Mucosa of descending colon (tissue), 3 donors: ENCODE measurements at regions of chrX and their contacts with region 1.

Region 1: DNA sequence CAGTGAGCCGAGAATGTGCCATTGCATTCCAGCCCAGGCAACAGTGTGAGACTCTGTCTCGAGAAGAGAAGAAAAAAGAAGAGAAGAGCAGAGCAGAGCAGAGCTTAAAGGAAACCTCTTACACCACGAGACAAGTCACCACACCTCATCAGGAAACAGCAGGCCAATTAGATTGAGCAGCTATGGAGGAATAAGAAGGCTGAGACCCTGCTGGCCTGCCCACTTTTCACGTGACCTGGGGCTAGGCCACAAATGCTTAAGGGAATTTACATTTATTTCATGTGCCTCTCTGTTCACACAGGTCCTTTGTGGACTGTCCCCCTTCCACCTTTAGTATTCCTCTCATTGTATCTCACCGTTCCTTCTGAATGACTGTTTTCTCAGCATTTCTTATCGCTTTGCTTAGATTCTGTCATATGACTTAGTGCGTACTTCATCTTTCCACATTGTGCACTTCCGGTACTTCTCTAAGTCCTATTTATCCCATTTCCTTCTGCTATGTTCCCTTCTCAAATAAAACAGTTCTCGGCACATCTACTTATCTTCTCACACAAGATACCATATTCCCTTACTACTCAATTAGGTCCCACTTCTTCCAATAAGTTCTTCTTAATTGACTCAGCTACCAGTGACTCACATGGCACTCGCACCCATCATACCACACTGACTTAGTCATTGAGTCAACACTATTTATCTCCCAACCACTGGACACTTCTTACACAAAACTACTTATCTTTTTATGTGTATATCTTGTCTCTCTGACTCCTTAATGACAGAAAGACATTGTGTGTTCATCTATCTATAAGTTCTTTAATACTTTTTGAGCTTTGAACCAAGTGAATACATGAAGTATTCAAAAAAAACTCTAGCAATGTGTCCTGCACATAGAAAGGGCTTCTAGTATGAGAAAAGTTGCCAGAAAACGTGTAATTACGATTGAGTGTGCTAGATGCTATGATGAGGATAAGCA is 11.0 kb downstream of the CUL4B start:
- DNase-seq: no peak
- ATAC-seq: peak; percentile 51
- H3K4me3 ChIP-seq: no peak overlapping the region
- H3K4me1 ChIP-seq: no peaks in the 10 kb centered on the region
- CTCF ChIP-seq: no peak

Region 2: DNA sequence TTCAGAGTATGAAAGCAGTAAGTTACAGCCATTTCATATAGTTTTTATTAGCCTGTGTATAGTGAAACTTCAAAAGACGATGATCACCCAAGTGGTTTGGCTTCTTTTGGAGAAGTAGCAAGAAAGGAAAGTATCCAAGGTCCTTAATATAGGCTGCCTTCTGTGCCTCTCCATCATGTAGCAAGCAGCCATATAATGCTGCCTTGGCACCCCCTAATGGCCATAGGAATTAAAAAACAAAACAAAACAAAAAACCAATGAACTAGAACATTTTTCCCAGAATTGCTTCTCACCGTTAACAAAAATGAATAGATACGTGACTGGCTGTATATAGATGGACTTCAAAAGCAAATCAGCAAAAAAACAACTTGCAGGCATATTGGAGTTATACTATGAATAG is 99.6 kb before region 1 on chrX:
- intact Hi-C with region 1: no loop called
- DNase-seq: no peak
- ATAC-seq: no peak
- H3K4me3 ChIP-seq: no peak overlapping the region
- H3K4me1 ChIP-seq: no peaks in the 10 kb centered on the region
- CTCF ChIP-seq: no peak

Region 3: GRCh38 chrX:120603707-120604360 is 54.1 kb after region 1 on chrX and contains the start of gene MCTS1:
- intact Hi-C with region 1: loop called in 1 of 2 experiments (anchors 10 kb)
- DNase-seq: peak; percentile 83 to 89 (median 86)
- ATAC-seq: peak; percentile 99
- H3K4me3 ChIP-seq: peak within 1 kb of the TSS; percentile 24
- H3K4me1 ChIP-seq: peaks cover 7% of the 10 kb centered on the region
- CTCF ChIP-seq: no peak
- total RNA-seq, gene MCTS1: 29.0 to 36.7 (median 35.0) TPM

Region 4: GRCh38 chrX:120638619-120639018 is 88.9 kb after region 1 on chrX:
- intact Hi-C with region 1: no loop called
- DNase-seq: no peak
- ATAC-seq: no peak
- H3K4me3 ChIP-seq: no peak overlapping the region
- H3K4me1 ChIP-seq: no peaks in the 10 kb centered on the region
- CTCF ChIP-seq: no peak

Region 5: DNA sequence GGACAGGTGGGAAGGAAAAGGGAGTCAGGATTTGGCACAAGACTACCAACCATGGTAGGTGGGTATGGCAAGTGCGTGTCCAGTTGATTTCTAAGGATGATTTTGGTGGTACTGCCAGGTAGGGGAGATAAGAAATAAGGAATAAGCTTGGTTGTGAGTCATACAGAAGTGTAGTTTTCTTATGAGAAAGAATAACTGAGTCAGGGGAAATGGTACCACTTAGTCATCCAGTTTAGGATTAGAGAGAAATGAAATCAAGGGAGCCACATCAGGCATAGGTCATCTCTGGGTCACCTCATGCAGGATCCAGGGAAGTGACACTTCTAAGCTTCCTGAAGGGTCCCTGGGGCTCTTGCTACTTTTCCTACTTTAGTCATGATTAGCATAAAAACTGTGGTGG is 187.2 kb after region 1 on chrX:
- intact Hi-C with region 1: no loop called
- DNase-seq: no peak
- ATAC-seq: no peak
- H3K4me3 ChIP-seq: no peak overlapping the region
- H3K4me1 ChIP-seq: no peaks in the 10 kb centered on the region
- CTCF ChIP-seq: no peak

Region 6: DNA sequence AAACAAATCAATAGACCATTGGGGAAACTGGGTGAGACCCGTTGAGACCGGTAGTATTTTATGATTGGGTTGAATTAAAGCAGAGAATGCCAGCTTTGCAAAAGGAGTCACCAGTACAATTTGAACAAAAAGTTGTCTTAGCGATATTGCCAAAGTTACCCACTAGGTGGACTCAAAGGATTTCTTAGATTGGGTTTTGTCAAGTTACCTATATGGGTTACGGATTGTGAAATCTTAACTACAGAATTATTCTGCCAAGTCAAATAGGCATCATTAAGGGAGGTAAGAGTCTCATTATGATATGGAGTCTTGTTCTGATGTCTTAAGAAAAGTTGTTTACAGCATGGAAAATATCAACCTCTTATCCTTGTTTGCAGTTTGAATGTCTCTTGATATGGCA is 450.8 kb after region 1 on chrX:
- intact Hi-C with region 1: no loop called
- DNase-seq: no peak
- ATAC-seq: no peak
- H3K4me3 ChIP-seq: no peak overlapping the region
- H3K4me1 ChIP-seq: no peaks in the 10 kb centered on the region
- CTCF ChIP-seq: no peak